ENCODE measurements at regions of chr11 and their contacts with region 1.

Region 1: DNA sequence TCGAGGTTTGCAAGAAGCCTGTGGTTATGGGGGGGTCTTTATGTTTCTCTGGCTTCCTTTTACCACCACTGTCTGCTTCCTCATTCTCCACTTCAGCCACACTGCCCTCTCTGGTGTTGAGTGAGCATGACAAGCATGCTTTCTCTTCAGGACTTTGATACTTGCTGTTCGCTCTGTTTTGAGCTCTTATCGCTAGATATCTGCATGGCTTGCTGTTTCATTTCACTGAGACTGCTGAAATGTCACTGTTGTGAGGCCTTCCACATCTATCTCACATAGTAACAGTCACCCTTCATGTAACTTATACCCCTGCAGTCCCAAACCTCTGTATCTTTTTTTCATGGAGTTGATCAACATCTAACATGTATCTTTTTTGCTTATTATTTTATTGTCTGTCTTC is 59.8 kb downstream of the TMEM135 start:
- DNase-seq: peak; percentile 68
- ATAC-seq: peak; percentile 99
- H3K4me3 Mint-ChIP-seq: no peak overlapping the region
- H3K27ac Mint-ChIP-seq: no peak overlapping the region
- H3K4me1 Mint-ChIP-seq: no peaks in the 10 kb centered on the region
- H3K27me3 Mint-ChIP-seq: no peaks in the 10 kb centered on the region
- CTCF ChIP-seq: peak; percentile 64

Region 2: DNA sequence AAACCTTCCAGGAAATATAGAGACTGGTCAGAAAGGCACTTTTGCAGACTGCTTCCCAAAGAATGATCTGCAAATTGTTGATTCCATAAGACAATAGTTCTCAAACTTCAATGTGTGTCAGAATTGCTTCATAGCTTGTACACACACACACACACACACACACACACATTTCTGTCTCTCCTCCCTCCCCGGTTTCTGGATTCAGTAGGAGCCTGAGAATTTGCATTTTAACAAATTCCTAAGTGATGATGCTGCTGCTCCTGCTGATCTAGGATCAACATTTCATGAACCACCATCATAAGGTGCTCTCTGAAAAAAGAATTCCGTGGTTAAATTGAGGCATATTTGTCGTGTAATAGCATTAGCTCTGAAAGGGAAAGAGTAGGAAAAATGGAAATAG is 107.1 kb before region 1 on chr11:
- CTCF ChIA-PET with region 1: interaction called, 18 read pairs
- POLR2A ChIA-PET with region 1: no interaction called
- DNase-seq: no peak
- ATAC-seq: peak; percentile 84
- H3K4me3 Mint-ChIP-seq: no peak overlapping the region
- H3K27ac Mint-ChIP-seq: peak overlapping the region; percentile 90
- H3K4me1 Mint-ChIP-seq: peaks cover 25% of the 10 kb centered on the region
- H3K27me3 Mint-ChIP-seq: no peaks in the 10 kb centered on the region
- CTCF ChIP-seq: no peak

Region 3: GRCh38 chr11:87037450-87038234 is 59.9 kb before region 1 on chr11 and contains the start of gene TMEM135:
- CTCF ChIA-PET with region 1: interaction called, 10 read pairs
- POLR2A ChIA-PET with region 1: no interaction called
- DNase-seq: peak; percentile 98
- ATAC-seq: peak; percentile 97
- H3K4me3 Mint-ChIP-seq: peak within 1 kb of the TSS; percentile 95
- H3K27ac Mint-ChIP-seq: peak within 1 kb of the TSS; percentile 92
- H3K4me1 Mint-ChIP-seq: peaks cover 60% of the 10 kb centered on the region
- H3K27me3 Mint-ChIP-seq: no peaks in the 10 kb centered on the region
- CTCF ChIP-seq: no peak
- total RNA-seq, gene TMEM135: 28.4 to 35.8 TPM (median 30.9 TPM) in 3 replicates